ENCODE measurements at regions of chr22 and their contacts with region 1.

Region 1: GRCh38 chr22:38272373-38273134 is at the start of gene TMEM184B:
- DNase-seq: peak; percentile 84
- ATAC-seq: peak; percentile 95
- H3K4me3 Mint-ChIP-seq: peak within 1 kb of the TSS; percentile 93
- H3K27ac Mint-ChIP-seq: peak within 1 kb of the TSS; percentile 93
- H3K4me1 Mint-ChIP-seq: peaks cover 40% of the 10 kb centered on the region
- H3K27me3 Mint-ChIP-seq: no peaks in the 10 kb centered on the region
- CTCF ChIP-seq: no peak
- total RNA-seq, gene TMEM184B: 17.4 and 24.0 TPM in 2 replicates

Region 2: DNA sequence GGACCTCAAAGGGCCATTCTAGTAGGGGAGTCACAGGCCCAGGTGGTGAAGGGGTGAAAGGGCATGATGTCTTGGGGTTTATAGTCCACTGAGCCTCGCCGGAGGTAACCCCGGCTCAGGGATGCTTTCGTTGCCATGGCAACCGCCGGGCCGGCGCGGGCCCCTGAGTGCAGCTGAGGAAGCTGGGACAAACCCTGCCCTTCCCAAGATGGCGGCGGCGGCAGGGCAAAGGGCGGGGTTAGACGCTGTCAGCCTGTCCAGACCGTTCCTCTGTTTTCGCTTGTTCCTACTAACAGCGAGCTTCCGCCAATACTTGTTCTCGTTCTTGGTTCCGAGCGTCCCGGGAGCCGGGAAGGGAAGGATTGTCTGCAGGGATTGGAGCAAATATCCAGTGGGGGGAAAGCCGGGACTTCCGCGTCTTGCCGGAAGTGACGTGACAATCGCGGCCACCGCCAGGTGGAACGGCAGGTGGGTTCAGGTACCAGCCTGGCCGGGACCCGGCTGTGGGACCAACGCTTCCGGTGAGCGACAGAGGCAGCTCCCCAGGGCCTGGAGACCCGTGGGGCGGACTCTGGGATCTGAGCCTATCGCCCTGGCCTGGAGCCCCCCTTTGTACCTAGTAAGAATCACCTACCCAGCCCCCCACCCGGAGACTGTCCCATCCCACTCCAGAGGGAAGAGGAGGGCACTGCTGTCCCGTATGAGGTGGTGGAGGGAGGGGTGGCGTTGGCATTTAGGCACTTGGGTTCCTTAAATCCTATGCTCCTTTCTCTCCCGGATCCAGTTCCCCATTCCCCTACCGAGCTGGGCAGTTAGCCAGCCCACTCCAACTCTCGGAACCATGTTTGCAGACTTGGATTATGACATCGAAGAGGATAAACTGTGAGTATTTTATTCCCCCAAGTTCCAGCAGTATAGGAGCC is 215.3 kb before region 1 on chr22 and contains the start of gene PICK1:
- CTCF ChIA-PET with region 1: interaction called, 3 read pairs
- POLR2A ChIA-PET with region 1: no interaction called
- intact Hi-C with region 1: loop called (anchors 1 kb)
- DNase-seq: peak; percentile 75
- ATAC-seq: peak; percentile 78
- H3K4me3 Mint-ChIP-seq: peak within 1 kb of the TSS; percentile 98
- H3K27ac Mint-ChIP-seq: peak within 1 kb of the TSS; percentile 97
- H3K4me1 Mint-ChIP-seq: peaks cover 19% of the 10 kb centered on the region
- H3K27me3 Mint-ChIP-seq: peaks cover 7% of the 10 kb centered on the region
- CTCF ChIP-seq: no peak
- total RNA-seq, gene PICK1: 21.5 and 25.5 TPM in 2 replicates

Region 3: GRCh38 chr22:38181453-38182247 is 90.9 kb before region 1 on chr22 and contains the start of gene PLA2G6:
- CTCF ChIA-PET with region 1: no interaction called
- POLR2A ChIA-PET with region 1: no interaction called
- intact Hi-C with region 1: loop called (anchors 2 kb)
- DNase-seq: peak; percentile 97
- ATAC-seq: peak; percentile 97
- H3K4me3 Mint-ChIP-seq: peak within 1 kb of the TSS; percentile 92
- H3K27ac Mint-ChIP-seq: peak within 1 kb of the TSS; percentile 85
- H3K4me1 Mint-ChIP-seq: peaks cover 43% of the 10 kb centered on the region
- H3K27me3 Mint-ChIP-seq: peaks cover 4% of the 10 kb centered on the region
- CTCF ChIP-seq: no peak
- total RNA-seq, gene PLA2G6: 53.0 and 64.0 TPM in 2 replicates

Region 4: DNA sequence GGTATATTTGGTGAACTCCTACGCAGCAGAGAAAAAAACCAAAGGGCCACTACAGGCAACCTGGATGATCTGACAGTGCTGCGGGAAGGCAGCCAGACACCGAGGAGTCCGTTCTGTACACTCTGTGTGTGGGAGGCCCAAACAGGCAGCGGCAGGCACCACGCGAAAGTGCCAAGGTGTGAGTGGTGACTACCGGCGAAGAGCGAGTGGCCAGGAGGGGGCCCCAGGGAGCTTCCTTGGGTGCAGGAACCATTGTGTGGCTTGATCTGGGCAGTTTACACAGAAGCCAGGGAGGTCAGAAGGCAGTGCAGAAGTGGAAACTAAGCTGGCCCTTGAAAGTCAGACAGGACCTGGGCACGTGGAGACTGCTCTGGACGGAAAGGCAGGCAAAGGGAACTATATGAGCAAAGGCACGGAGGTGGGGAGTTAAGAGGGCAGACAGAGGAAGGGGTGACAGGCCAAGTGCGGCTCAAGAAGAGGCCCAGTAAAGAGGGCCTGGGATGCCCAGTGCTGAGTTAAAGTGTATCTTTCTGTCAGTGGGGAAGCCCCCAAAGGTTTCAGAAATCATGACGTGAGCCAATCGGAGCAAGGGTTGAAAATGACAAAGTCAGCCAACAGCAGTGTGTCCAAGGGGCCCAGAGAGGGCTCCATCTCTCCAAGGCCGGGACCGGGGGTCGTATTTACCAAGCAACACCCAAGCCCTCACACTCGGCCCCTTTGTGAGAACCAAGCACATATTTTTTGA is 10.3 kb before region 1 on chr22:
- CTCF ChIA-PET with region 1: interaction called, 7 read pairs
- POLR2A ChIA-PET with region 1: interaction called, 15 read pairs
- intact Hi-C with region 1: loop called (anchors 1 kb)
- DNase-seq: peak; percentile 34
- ATAC-seq: peak; percentile 38
- H3K4me3 Mint-ChIP-seq: no peak overlapping the region
- H3K27ac Mint-ChIP-seq: peak overlapping the region; percentile 57
- H3K4me1 Mint-ChIP-seq: peaks cover 44% of the 10 kb centered on the region
- H3K27me3 Mint-ChIP-seq: no peaks in the 10 kb centered on the region
- CTCF ChIP-seq: no peak

Region 5: GRCh38 chr22:38317122-38317994 is 44.8 kb after region 1 on chr22 and contains the start of gene CSNK1E:
- CTCF ChIA-PET with region 1: no interaction called
- POLR2A ChIA-PET with region 1: interaction called, 5 read pairs
- intact Hi-C with region 1: loop called (anchors 1 kb)
- DNase-seq: peak; percentile 72
- ATAC-seq: peak; percentile 58
- H3K4me3 Mint-ChIP-seq: peak within 1 kb of the TSS; percentile 82
- H3K27ac Mint-ChIP-seq: peak within 1 kb of the TSS; percentile 88
- H3K4me1 Mint-ChIP-seq: peaks cover 50% of the 10 kb centered on the region
- H3K27me3 Mint-ChIP-seq: no peaks in the 10 kb centered on the region
- CTCF ChIP-seq: no peak
- total RNA-seq, gene CSNK1E: 80.6 and 85.2 TPM in 2 replicates

Region 6: GRCh38 chr22:38398609-38399461 is 126.3 kb after region 1 on chr22:
- CTCF ChIA-PET with region 1: no interaction called
- POLR2A ChIA-PET with region 1: no interaction called
- intact Hi-C with region 1: loop called (anchors 5 kb)
- DNase-seq: peak; percentile 79
- ATAC-seq: peak; percentile 73
- H3K4me3 Mint-ChIP-seq: peak overlapping the region; percentile 82
- H3K27ac Mint-ChIP-seq: peak overlapping the region; percentile 84
- H3K4me1 Mint-ChIP-seq: peaks cover 37% of the 10 kb centered on the region
- H3K27me3 Mint-ChIP-seq: no peaks in the 10 kb centered on the region
- CTCF ChIP-seq: no peak